Activated CD8-positive, alpha-beta memory T cell treated with anti-CD3 and anti-CD28 coated beads, Interleukin-2, amount 10 ng/mL, durations not matched to agents 7 days and 5 days (primary cell): ENCODE measurements at regions of chr4 and their contacts with region 1.

Region 1: GRCh38 chr4:75844151-75844662 is 58.0 kb downstream of the PPEF2 start:
- DNase-seq: no peak
- ATAC-seq: no peak
- H3K4me3 Mint-ChIP-seq: no peak overlapping the region
- H3K27ac Mint-ChIP-seq: peak overlapping the region; percentile 34
- H3K4me1 Mint-ChIP-seq: peaks cover 16% of the 10 kb centered on the region
- H3K27me3 Mint-ChIP-seq: no peaks in the 10 kb centered on the region

Region 2: DNA sequence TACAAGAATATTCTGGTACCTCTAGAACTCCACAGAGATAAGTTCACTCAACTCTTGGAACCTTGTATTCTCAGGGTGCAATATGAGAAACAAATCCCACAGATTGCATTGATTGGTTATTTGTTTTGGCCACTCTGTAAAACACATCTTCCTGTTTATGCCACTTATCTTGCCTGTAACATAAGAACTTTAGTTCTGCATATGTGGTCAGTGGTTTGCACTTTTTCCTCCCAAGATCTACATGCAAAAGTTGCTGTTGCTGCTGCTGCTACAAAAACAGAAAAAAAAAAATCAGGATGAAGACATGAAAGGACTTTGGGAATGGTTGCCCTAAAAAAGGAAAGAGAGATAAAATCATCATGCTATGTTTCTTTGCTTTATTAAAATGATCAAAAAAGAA is 278.7 kb before region 1 on chr4:
- CTCF ChIA-PET with region 1: interaction called, 17 read pairs
- DNase-seq: no peak
- ATAC-seq: peak; percentile 47
- H3K4me3 Mint-ChIP-seq: peak overlapping the region; percentile 10
- H3K27ac Mint-ChIP-seq: peak overlapping the region; percentile 33
- H3K4me1 Mint-ChIP-seq: peaks cover 27% of the 10 kb centered on the region
- H3K27me3 Mint-ChIP-seq: peaks cover 20% of the 10 kb centered on the region

Region 3: GRCh38 chr4:75821216-75821615 is 23.0 kb before region 1 on chr4:
- CTCF ChIA-PET with region 1: no interaction called
- DNase-seq: no peak
- ATAC-seq: no peak
- H3K4me3 Mint-ChIP-seq: no peak overlapping the region
- H3K27ac Mint-ChIP-seq: no peak overlapping the region
- H3K4me1 Mint-ChIP-seq: no peaks in the 10 kb centered on the region
- H3K27me3 Mint-ChIP-seq: no peaks in the 10 kb centered on the region

Region 4: GRCh38 chr4:75831856-75832405 is 12.3 kb before region 1 on chr4:
- CTCF ChIA-PET with region 1: interaction called, 10 read pairs
- DNase-seq: no peak
- ATAC-seq: no peak
- H3K4me3 Mint-ChIP-seq: no peak overlapping the region
- H3K27ac Mint-ChIP-seq: no peak overlapping the region
- H3K4me1 Mint-ChIP-seq: no peaks in the 10 kb centered on the region
- H3K27me3 Mint-ChIP-seq: peaks cover 15% of the 10 kb centered on the region